CD4-positive, alpha-beta T cell (primary cell): ENCODE measurements at regions of chr17 and their contacts with region 1.

Region 1: GRCh38 chr17:48610282-48611211 is at the start of gene HOXB7:
- DNase-seq: peak in 7 of 14 experiments; percentile 36 to 70 (median 60)
- ATAC-seq: peak; percentile 18
- H3K4me3 ChIP-seq: peak within 1 kb of the TSS; percentile 71
- H3K4me3 Mint-ChIP-seq: peak within 1 kb of the TSS; percentile 89
- H3K27ac ChIP-seq: no peak within 1 kb of the TSS
- H3K27ac Mint-ChIP-seq: no peak within 1 kb of the TSS
- H3K4me1 ChIP-seq: peaks cover 57% of the 10 kb centered on the region
- H3K4me1 Mint-ChIP-seq: peaks cover 51% of the 10 kb centered on the region
- H3K27me3 ChIP-seq: peaks cover 75 to 80% of the 10 kb centered on the region in 2 experiments
- H3K27me3 Mint-ChIP-seq: peaks cover 89% of the 10 kb centered on the region
- CTCF ChIP-seq: no peak
- total RNA-seq, gene HOXB7: not detected

Region 2: DNA sequence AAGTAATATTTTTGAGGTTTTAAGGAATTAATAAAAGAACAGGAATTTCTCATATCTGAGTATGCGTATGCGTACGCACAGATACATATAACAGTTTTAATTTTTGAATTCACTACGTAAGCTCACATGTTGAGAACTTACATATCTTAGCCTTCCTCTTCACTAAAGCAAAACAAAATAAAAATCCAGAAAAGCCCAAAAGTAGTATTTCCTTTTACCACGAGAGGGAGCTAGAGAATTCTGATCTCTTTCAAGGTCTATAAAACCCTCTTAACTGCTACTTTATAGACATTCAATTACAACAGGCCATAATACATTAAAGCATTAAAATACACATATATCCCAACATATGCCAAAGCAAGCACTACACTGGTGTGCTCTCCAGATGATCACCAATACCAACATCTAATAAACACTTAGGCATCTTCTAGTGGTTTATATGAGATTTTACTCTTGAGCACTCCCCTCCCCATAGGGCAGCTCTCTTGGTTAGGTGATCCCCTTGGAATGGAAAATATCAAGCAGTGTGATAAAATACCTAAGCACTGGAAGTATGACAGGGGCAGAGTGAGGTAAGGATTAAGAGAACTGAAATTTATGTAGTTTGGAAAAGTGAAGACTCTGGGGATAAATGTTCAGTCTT is 274.6 kb before region 1 on chr17:
- CTCF ChIA-PET with region 1: no interaction called
- POLR2A ChIA-PET with region 1: interaction called, 3 read pairs
- intact Hi-C with region 1: loop called in 1 of 2 experiments (anchors 5 kb)
- DNase-seq: peak in 3 of 14 experiments; percentile 74 to 79 (median 76)
- ATAC-seq: peak; percentile 66
- H3K4me3 ChIP-seq: no peak overlapping the region
- H3K4me3 Mint-ChIP-seq: no peak overlapping the region
- H3K27ac ChIP-seq: no peak overlapping the region
- H3K27ac Mint-ChIP-seq: no peak overlapping the region
- H3K4me1 ChIP-seq: no peaks in the 10 kb centered on the region
- H3K4me1 Mint-ChIP-seq: peaks cover 6% of the 10 kb centered on the region
- H3K27me3 ChIP-seq: no peaks in the 10 kb centered on the region
- H3K27me3 Mint-ChIP-seq: no peaks in the 10 kb centered on the region
- CTCF ChIP-seq: peak; percentile 85

Region 3: GRCh38 chr17:48625495-48626244 is 15.1 kb after region 1 on chr17:
- CTCF ChIA-PET with region 1: interaction called, 7 read pairs
- POLR2A ChIA-PET with region 1: interaction called, 10 read pairs
- intact Hi-C with region 1: no loop called
- DNase-seq: peak in 5 of 14 experiments; percentile 33 to 76 (median 43)
- ATAC-seq: peak; percentile 63
- H3K4me3 ChIP-seq: peak overlapping the region; percentile 44
- H3K4me3 Mint-ChIP-seq: peak overlapping the region; percentile 52
- H3K27ac ChIP-seq: no peak overlapping the region
- H3K27ac Mint-ChIP-seq: no peak overlapping the region
- H3K4me1 ChIP-seq: peaks cover 31% of the 10 kb centered on the region
- H3K4me1 Mint-ChIP-seq: peaks cover 16% of the 10 kb centered on the region
- H3K27me3 ChIP-seq: peaks cover 88 to 98% of the 10 kb centered on the region in 2 experiments
- H3K27me3 Mint-ChIP-seq: peaks cover 99% of the 10 kb centered on the region
- CTCF ChIP-seq: no peak